ENCODE measurements at regions of chr14 and their contacts with region 1.

Region 1: DNA sequence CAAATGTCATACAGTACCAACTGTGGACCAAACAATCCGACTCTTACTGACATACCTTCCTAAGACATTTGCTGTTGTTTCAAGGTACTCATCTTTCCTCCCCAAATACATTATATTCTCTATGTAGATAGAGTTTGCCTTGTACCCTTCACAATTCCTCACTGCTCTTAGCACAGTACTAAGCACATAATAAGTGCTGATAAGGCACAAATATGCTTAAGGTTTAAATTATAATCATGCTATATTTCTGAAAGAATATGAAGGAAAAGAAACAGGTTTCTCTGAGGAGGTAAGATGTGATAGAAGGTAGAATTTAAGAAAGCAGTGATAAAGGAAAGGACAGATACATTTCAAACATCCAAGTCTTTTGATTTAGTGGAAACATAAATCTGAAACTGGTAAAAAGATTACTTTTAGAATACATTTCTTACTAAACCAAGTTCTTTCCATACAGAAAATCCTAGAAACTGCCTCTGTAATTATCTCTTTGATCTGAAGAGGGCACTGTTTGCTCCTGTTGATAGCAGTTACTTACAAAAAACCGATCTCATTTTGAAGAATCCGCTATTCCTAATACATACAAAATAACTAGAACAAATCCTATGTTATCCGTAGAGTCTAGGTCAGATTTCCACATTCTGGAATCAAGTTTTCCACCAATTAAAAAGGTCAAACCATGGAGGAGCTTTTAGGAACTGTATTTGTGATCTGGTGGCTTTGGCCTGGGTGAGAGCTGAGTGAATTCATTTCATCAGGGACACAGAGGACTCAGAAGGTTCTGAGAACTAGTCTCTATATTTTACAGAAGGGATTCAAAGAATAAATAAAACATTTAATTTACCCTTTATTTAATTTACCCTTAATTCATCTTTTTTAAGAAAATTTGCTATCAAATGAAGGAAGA is 311.9 kb downstream of the DAD1 start:
- DNase-seq: no peak
- H3K4me3 Mint-ChIP-seq: no peak overlapping the region
- H3K27ac Mint-ChIP-seq: no peak overlapping the region
- H3K4me1 Mint-ChIP-seq: peaks cover 2% of the 10 kb centered on the region
- H3K27me3 Mint-ChIP-seq: no peaks in the 10 kb centered on the region

Region 2: GRCh38 chr14:22221508-22221907 is 55.7 kb before region 1 on chr14:
- intact Hi-C with region 1: loop called (anchors 10 kb)
- DNase-seq: no peak
- H3K4me3 Mint-ChIP-seq: peak overlapping the region; percentile 68
- H3K27ac Mint-ChIP-seq: peak overlapping the region; percentile 38
- H3K4me1 Mint-ChIP-seq: peaks cover 9% of the 10 kb centered on the region
- H3K27me3 Mint-ChIP-seq: no peaks in the 10 kb centered on the region

Measured in activated T-helper 2 cell treated with anti-CD3 and anti-CD28 coated beads, Interferon-gamma antibody, Interleukin-2, Interleukin-4, amounts not matched to agents 10 μg/mL and 5 μg/mL and 100 μg/mL, durations not matched to agents 14 hours and 24 hours and 36 hours (primary cell).